ENCODE measurements at regions of chr17 and their contacts with region 1.

Region 1: GRCh38 chr17:1186923-1187771 is 7.4 kb upstream of the ABR start:
- DNase-seq: peak; percentile 70 to 75 (median 73)
- H3K4me3 ChIP-seq: no peak overlapping the region
- H3K4me3 Mint-ChIP-seq: no peak overlapping the region
- H3K27ac ChIP-seq: no peak overlapping the region
- H3K27ac Mint-ChIP-seq: peak overlapping the region in 3 of 7 donors; percentile 46 to 66 (median 46)
- H3K4me1 ChIP-seq: peaks cover 6% of the 10 kb centered on the region
- H3K4me1 Mint-ChIP-seq: peaks cover 3 to 16% (median 7%) of the 10 kb centered on the region in 4 donors
- H3K27me3 ChIP-seq: no peaks in the 10 kb centered on the region
- H3K27me3 Mint-ChIP-seq: peaks cover 4 to 8% of the 10 kb centered on the region in 2 donors

Region 2: DNA sequence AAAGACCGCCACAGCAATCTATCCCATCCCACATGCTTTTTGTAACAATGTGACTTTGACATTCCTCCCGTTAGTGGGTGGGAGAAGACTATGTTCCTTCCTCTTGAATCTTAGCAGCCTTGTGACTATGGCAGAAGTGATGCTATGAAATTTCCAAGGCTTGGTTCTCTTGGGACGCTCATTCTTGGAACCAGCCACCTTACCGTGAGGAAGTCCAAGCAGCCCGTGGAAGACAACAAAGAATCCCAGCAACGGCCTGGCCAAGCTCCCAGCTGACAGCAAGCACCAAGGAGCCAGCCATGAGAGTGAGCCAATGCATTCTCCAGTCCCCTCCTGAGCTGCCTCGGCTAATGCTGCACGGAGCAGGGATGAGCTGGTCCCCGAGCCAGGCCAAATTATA is 534.8 kb before region 1 on chr17:
- CTCF ChIA-PET with region 1: no interaction called
- POLR2A ChIA-PET with region 1: no interaction called
- intact Hi-C with region 1: no loop called
- DNase-seq: no peak
- H3K4me3 ChIP-seq: no peak overlapping the region
- H3K4me3 Mint-ChIP-seq: no peak overlapping the region
- H3K27ac ChIP-seq: no peak overlapping the region
- H3K27ac Mint-ChIP-seq: no peak overlapping the region
- H3K4me1 ChIP-seq: no peaks in the 10 kb centered on the region
- H3K4me1 Mint-ChIP-seq: peaks cover 0 to 1% (median 0%) of the 10 kb centered on the region in 4 donors
- H3K27me3 ChIP-seq: no peaks in the 10 kb centered on the region
- H3K27me3 Mint-ChIP-seq: no peaks in the 10 kb centered on the region

Region 3: GRCh38 chr17:983921-984320 is 203.2 kb before region 1 on chr17:
- CTCF ChIA-PET with region 1: no interaction called
- POLR2A ChIA-PET with region 1: no interaction called
- intact Hi-C with region 1: no loop called
- DNase-seq: no peak
- H3K4me3 ChIP-seq: no peak overlapping the region
- H3K4me3 Mint-ChIP-seq: no peak overlapping the region
- H3K27ac ChIP-seq: no peak overlapping the region
- H3K27ac Mint-ChIP-seq: peak overlapping the region in 1 of 7 donors; percentile 53
- H3K4me1 ChIP-seq: peaks cover 10% of the 10 kb centered on the region
- H3K4me1 Mint-ChIP-seq: peaks cover 4 to 14% (median 9%) of the 10 kb centered on the region in 4 donors
- H3K27me3 ChIP-seq: no peaks in the 10 kb centered on the region
- H3K27me3 Mint-ChIP-seq: no peaks in the 10 kb centered on the region

Region 4: DNA sequence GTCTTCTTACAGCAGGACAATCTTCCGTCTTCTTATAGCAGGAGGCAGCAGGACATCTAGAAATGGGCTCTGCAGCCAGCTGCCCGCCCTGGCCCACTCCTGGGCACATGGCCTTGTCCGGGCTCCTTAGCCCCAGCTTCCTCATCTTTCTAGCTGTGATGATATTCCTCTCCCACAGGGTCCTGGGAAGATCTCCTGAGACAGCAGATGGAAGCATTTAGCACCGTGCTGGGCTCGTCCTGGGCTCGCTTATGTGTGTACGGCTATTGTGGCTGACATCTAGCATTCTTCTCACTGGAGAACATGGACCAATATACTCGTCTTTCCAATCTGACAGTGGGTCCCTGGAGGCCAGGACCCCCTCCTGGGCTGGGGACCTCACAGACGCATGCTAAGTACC is 141.7 kb before region 1 on chr17:
- CTCF ChIA-PET with region 1: no interaction called
- POLR2A ChIA-PET with region 1: no interaction called
- intact Hi-C with region 1: no loop called
- DNase-seq: no peak
- H3K4me3 ChIP-seq: no peak overlapping the region
- H3K4me3 Mint-ChIP-seq: no peak overlapping the region
- H3K27ac ChIP-seq: no peak overlapping the region
- H3K27ac Mint-ChIP-seq: no peak overlapping the region
- H3K4me1 ChIP-seq: no peaks in the 10 kb centered on the region
- H3K4me1 Mint-ChIP-seq: peaks cover 0 to 15% (median 6%) of the 10 kb centered on the region in 4 donors
- H3K27me3 ChIP-seq: no peaks in the 10 kb centered on the region
- H3K27me3 Mint-ChIP-seq: no peaks in the 10 kb centered on the region

Region 5: GRCh38 chr17:1055751-1056645 is 131.1 kb before region 1 on chr17:
- CTCF ChIA-PET with region 1: interaction called, 13 read pairs
- POLR2A ChIA-PET with region 1: no interaction called
- intact Hi-C with region 1: no loop called
- DNase-seq: peak in 3 of 5 donors; percentile 10 to 29 (median 16)
- H3K4me3 ChIP-seq: no peak overlapping the region
- H3K4me3 Mint-ChIP-seq: no peak overlapping the region
- H3K27ac ChIP-seq: no peak overlapping the region
- H3K27ac Mint-ChIP-seq: peak overlapping the region in 1 of 7 donors; percentile 36
- H3K4me1 ChIP-seq: no peaks in the 10 kb centered on the region
- H3K4me1 Mint-ChIP-seq: peaks cover 0 to 6% (median 0%) of the 10 kb centered on the region in 4 donors
- H3K27me3 ChIP-seq: no peaks in the 10 kb centered on the region
- H3K27me3 Mint-ChIP-seq: no peaks in the 10 kb centered on the region

Region 6: DNA sequence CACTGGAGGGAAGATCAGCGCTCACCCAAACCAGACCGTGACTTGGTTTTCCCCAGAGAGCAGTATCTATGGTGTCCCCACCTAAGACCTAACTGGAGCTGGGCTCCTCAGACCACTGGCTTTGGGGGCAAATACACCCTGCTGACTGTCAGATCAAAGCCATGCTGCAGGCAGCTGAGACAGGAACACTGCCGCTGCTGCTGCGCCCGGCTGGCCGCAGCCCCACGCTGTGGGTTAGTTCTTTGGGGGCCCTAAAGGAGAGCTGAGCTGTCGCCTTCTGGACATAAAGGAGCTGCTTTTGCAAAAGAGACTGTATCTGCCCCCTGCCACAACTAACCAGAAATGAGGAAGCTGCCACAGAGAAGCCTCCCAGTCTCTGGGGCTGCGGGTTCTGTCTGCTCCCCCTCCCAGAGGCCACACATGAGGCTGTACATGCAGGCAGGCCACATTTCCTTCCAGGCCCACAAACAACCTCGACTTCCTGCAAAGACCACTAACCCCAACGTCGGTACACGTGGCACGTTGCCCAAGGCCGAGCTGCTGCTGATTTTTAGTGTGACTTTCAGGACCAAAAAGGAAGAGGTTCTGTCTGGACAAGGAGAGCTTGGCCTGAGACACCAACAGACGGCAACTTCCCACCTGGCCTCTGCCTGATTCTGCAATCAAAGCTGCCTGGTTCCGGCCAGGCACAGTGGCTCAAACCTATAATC is 10.8 kb after region 1 on chr17:
- CTCF ChIA-PET with region 1: interaction called, 23 read pairs
- POLR2A ChIA-PET with region 1: interaction called, 9 read pairs
- intact Hi-C with region 1: no loop called
- DNase-seq: peak; percentile 61 to 77 (median 72)
- H3K4me3 ChIP-seq: no peak overlapping the region
- H3K4me3 Mint-ChIP-seq: peak overlapping the region; percentile 10 to 81 (median 62)
- H3K27ac ChIP-seq: no peak overlapping the region
- H3K27ac Mint-ChIP-seq: peak overlapping the region; percentile 22 to 88 (median 75)
- H3K4me1 ChIP-seq: peaks cover 58% of the 10 kb centered on the region
- H3K4me1 Mint-ChIP-seq: peaks cover 32 to 53% (median 42%) of the 10 kb centered on the region in 4 donors
- H3K27me3 ChIP-seq: no peaks in the 10 kb centered on the region
- H3K27me3 Mint-ChIP-seq: no peaks in the 10 kb centered on the region

Region 7: DNA sequence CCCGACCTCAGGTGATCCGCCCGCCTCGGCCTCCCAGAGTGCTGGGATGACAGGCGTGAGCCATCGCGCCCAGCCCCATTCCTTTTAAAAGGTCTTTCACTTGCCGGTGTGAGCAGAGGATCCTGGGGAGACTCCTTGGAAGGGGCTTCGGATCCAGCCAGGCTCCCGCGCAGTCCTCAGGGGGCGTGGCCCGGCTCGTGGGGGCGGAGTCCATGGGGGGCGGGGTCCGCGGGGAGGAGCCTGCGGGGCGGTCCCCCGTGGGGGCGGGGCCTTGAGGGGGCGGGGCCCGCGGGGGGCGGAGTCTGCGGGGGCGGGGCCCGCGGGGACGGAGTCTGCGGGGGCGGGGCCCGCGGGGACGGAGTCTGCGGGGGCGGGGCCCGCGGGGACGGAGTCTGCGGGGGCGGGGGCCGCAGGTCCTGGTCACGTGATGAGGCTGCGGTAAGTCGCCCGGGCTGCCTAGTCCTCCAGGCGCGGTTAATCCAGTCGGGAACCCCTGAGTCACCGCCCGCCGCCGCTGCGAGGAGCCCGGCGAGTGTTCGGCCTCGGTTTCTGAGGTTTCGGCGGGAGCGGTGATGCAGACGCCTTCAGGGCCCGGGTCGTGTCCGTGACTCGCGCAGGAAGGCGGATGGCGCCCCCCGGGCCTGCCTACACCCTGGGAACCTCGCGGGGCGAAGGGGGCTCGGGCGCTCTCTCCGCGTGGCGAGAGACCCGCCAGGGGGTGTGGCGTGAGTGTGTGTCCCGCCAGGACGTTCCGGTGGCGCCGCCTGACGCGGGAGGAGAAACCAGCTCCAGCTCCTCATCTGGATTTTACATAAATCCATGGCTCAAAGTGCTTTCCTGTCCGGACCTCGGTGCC is 16.2 kb after region 1 on chr17:
- CTCF ChIA-PET with region 1: interaction called, 23 read pairs
- POLR2A ChIA-PET with region 1: interaction called, 9 read pairs
- intact Hi-C with region 1: no loop called
- DNase-seq: peak; percentile 29 to 80 (median 47)
- H3K4me3 ChIP-seq: no peak overlapping the region
- H3K4me3 Mint-ChIP-seq: peak overlapping the region in 2 of 8 donors; percentile 43 to 54
- H3K27ac ChIP-seq: no peak overlapping the region
- H3K27ac Mint-ChIP-seq: peak overlapping the region in 1 of 7 donors; percentile 78
- H3K4me1 ChIP-seq: peaks cover 45% of the 10 kb centered on the region
- H3K4me1 Mint-ChIP-seq: peaks cover 19 to 36% (median 29%) of the 10 kb centered on the region in 4 donors
- H3K27me3 ChIP-seq: no peaks in the 10 kb centered on the region
- H3K27me3 Mint-ChIP-seq: no peaks in the 10 kb centered on the region

Region 8: DNA sequence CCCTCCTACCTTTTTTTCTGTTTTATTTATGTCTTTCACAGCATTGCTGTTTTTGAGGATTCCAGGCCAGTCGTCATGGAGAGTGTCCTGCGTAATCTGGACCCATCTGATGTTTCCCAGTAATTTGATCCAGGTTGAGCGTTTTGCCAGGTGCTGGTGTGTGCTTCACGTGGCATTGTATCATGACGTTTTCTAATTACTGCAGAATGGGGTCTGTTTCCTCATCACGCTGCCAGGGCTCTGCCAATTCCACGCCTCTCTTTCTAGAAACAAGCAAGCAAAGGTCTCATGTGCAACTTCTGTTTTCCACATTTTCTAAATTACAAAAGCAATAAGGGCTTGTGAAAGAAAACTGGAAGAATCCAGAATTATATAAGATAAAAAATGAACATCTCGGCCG is 54.8 kb after region 1 on chr17:
- CTCF ChIA-PET with region 1: no interaction called
- POLR2A ChIA-PET with region 1: no interaction called
- intact Hi-C with region 1: no loop called
- DNase-seq: no peak
- H3K4me3 ChIP-seq: no peak overlapping the region
- H3K4me3 Mint-ChIP-seq: no peak overlapping the region
- H3K27ac ChIP-seq: no peak overlapping the region
- H3K27ac Mint-ChIP-seq: peak overlapping the region in 1 of 7 donors; percentile 13
- H3K4me1 ChIP-seq: peaks cover 19% of the 10 kb centered on the region
- H3K4me1 Mint-ChIP-seq: peaks cover 11 to 21% (median 17%) of the 10 kb centered on the region in 4 donors
- H3K27me3 ChIP-seq: no peaks in the 10 kb centered on the region
- H3K27me3 Mint-ChIP-seq: peaks cover 7 to 16% of the 10 kb centered on the region in 2 donors